ENCODE measurements at regions of chr10 and their contacts with region 1.

Region 1: DNA sequence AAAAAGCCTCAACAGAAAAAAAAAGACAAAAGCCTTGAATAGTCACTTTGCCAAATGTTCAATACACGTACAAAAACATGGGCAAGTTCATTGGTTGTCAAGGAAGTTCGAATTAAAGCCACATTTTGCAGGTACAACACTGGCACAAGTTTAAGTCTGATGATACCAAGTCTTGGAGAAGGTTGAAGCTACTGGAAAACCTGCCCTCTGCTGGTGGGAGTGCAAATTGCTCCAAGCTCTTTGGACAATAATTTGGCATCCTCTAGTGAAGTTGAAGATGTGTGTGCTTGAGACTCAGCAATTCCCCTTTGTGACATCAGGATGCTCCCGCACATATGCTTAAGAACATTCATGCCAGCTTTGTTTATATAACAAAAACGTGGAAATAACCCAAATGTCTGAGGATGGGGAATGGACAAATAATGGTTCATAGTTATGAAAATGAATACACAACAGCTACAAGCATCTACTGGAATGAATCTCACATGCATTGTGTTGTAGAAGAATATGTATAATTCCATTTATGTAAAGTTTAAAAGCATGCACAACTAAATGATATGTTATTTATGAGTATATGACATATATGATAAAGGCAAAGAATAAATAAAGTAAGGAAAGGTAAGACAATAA is 120.0 kb upstream of the PLPP4 start:
- DNase-seq: peak; percentile 49
- H3K4me3 ChIP-seq: no peak overlapping the region
- H3K27ac ChIP-seq: no peak overlapping the region
- H3K4me1 ChIP-seq: no peaks in the 10 kb centered on the region
- CTCF ChIP-seq: peak; percentile 93

Region 2: DNA sequence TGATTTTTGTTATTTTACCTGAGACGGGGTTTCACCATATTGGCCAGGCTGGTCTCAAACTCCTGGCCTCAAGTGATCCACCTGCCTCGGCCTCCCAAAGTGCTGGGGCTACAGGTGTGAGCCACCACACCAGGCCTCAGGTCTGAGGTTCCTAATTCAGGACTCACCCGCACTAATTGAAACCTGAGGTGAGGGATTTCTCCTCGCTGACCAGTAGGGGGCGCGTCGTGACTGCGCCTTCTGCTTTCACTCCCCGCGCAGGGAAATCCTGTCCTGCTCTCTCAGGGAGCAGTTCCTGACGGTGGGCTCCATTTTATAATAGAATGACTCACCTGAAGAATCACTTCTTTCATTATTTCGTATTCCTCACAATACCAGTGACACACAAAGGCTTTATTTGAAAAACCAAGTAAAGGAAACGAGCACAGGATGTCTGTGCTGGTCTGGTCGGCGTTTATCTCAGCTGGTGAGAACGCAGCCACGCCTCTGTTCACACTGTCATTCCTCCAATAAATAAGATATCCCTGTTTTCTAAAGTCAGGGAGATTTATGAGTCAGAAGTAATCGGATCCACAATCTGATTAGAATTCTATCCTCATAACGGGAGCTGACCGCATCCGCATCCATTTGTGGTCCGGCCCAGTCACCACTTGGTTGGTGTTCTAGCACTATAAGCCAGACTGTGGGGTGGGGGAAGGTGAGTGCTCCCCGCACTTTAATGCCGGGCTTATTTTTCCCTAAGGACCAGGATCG is 650.4 kb before region 1 on chr10:
- CTCF ChIA-PET with region 1: no interaction called
- POLR2A ChIA-PET with region 1: no interaction called
- intact Hi-C with region 1: loop called (anchors 5 kb)
- DNase-seq: peak; percentile 80
- H3K4me3 ChIP-seq: no peak overlapping the region
- H3K27ac ChIP-seq: no peak overlapping the region
- H3K4me1 ChIP-seq: no peaks in the 10 kb centered on the region
- CTCF ChIP-seq: peak; percentile 95

Region 3: DNA sequence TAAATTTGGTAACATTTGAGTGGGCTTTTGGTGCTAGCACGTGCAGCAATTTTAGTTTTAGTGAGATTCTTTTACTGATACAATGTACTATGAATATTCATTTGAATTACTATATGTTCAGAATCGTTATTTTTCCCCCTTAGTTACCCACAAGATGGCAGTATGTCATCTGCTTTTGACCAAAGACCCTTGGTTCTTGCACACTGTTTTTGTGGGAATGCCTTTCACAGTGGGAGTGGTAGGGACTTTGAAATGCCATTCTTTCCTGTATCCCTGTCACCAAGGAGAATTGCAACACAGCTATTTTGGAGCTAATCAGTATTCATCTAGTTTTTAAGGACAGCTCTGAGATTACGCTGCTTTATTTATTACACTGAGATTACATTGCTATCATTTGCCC is 403.8 kb before region 1 on chr10:
- CTCF ChIA-PET with region 1: no interaction called
- POLR2A ChIA-PET with region 1: no interaction called
- intact Hi-C with region 1: loop called (anchors 1 kb)
- DNase-seq: peak; percentile 7
- H3K4me3 ChIP-seq: no peak overlapping the region
- H3K27ac ChIP-seq: no peak overlapping the region
- H3K4me1 ChIP-seq: no peaks in the 10 kb centered on the region
- CTCF ChIP-seq: peak; percentile 75

Region 4: GRCh38 chr10:120221873-120222485 is 115.0 kb before region 1 on chr10:
- CTCF ChIA-PET with region 1: no interaction called
- POLR2A ChIA-PET with region 1: no interaction called
- intact Hi-C with region 1: loop called (anchors 5 kb)
- DNase-seq: peak; percentile 43
- H3K4me3 ChIP-seq: no peak overlapping the region
- H3K27ac ChIP-seq: no peak overlapping the region
- H3K4me1 ChIP-seq: no peaks in the 10 kb centered on the region
- CTCF ChIP-seq: peak; percentile 78